HEK293 (cell line): ENCODE measurements at regions of chr19 and their contacts with region 1.

Region 1: GRCh38 chr19:41859618-41860418 is at the start of gene RPS19:
- H3K4me3 ChIP-seq: peak within 1 kb of the TSS; percentile 89
- H3K27ac ChIP-seq: peak within 1 kb of the TSS; percentile 100
- H3K4me1 ChIP-seq: peaks cover 27% of the 10 kb centered on the region
- CTCF ChIP-seq: peak; percentile 100

Region 2: DNA sequence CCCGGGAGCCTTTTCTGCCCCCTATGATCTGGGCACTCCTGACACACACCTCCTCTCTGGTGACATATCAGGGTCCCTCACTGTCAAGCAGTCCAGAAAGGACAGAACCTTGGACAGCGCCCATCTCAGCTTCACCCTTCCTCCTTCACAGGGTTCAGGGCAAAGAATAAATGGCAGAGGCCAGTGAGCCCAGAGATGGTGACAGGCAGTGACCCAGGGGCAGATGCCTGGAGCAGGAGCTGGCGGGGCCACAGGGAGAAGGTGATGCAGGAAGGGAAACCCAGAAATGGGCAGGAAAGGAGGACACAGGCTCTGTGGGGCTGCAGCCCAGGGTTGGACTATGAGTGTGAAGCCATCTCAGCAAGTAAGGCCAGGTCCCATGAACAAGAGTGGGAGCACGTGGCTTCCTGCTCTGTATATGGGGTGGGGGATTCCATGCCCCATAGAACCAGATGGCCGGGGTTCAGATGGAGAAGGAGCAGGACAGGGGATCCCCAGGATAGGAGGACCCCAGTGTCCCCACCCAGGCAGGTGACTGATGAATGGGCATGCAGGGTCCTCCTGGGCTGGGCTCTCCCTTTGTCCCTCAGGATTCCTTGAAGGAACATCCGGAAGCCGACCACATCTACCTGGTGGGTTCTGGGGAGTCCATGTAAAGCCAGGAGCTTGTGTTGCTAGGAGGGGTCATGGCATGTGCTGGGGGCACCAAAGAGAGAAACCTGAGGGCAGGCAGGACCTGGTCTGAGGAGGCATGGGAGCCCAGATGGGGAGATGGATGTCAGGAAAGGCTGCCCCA is 163.2 kb before region 1 on chr19:
- CTCF ChIA-PET with region 1: no interaction called
- POLR2A ChIA-PET with region 1: no interaction called
- H3K4me3 ChIP-seq: no peak overlapping the region
- H3K27ac ChIP-seq: no peak overlapping the region
- H3K4me1 ChIP-seq: no peaks in the 10 kb centered on the region
- CTCF ChIP-seq: no peak

Region 3: DNA sequence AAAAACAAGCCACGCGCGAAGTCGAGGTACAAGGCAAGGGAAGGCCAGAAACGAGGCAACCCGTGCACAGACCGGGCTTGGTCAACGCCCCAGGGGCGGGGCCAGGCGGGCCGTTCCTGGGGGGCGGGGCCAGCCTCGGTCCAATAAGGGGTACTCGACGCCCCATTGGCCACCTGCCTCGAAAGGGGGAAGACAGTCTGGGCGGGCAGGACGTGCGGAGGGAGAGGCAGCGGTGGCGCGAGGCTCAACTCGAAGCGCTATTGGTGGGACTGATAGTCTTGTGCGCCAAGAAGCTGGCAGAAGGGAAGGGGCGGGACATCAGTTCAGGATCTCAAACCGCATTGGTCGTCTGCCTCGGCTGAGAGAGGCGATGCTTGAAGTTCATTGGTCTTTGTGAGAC is 15.2 kb before region 1 on chr19 and contains the start of gene LYPD4:
- CTCF ChIA-PET with region 1: interaction called, 7 read pairs
- POLR2A ChIA-PET with region 1: interaction called, 54 read pairs
- H3K4me3 ChIP-seq: no peak within 1 kb of the TSS
- H3K27ac ChIP-seq: no peak within 1 kb of the TSS
- H3K4me1 ChIP-seq: no peaks in the 10 kb centered on the region
- CTCF ChIP-seq: no peak

Region 4: DNA sequence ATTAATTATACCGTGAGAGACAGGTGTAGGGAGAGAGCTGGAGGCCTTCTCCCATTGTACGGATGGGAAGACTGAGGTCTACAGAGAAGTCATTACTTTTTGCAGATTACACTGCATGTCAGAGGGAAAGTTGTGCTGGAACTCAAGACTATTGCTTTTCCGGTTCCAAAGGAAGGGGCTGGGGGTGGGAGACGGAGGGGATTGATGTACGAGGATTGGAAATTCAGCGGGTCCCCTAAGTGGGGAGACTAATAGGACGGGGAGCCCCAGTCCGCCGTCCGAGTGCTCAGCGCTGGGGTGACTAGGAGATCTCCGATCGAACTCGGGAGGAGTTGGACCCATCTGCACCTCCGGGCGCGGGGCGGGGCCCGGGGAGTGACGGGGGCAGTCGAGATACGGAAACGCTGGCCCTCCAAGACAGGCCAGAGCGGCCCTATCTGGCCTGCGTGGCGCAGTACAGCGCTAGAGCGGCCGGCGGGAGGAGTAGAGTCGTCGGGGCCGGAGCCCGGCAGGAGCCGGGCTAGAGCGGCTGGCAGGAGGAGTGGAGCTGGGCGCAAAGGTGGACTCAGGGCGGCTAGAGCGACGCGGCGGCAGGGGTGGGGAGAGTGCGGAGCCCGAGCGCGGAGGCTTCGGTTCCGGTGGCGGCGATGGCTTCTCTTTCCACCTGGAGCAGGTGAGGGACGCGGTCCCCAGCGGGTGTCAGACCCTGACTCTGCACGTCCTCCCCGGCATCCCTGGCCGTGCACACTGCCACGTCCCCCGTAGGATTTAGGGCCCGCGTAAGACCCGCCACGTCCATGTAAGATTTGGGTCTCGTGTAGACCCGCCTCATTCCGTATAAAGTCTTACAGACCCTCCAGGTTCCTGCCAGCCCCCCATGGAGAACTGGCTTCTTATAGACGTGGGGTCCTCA is 24.3 kb after region 1 on chr19:
- CTCF ChIA-PET with region 1: interaction called, 8 read pairs
- POLR2A ChIA-PET with region 1: interaction called, 68 read pairs
- H3K4me3 ChIP-seq: peak overlapping the region; percentile 85
- H3K27ac ChIP-seq: peak overlapping the region; percentile 62; the same call in 1 of the 2 replicates
- H3K4me1 ChIP-seq: peaks cover 11% of the 10 kb centered on the region; the same call in 1 of the 2 replicates
- CTCF ChIP-seq: peak; percentile 78; the same call in 1 of the 2 replicates

Region 5: GRCh38 chr19:41959056-41960053 is 99.5 kb after region 1 on chr19 and contains the start of gene RABAC1:
- CTCF ChIA-PET with region 1: interaction called, 11 read pairs
- POLR2A ChIA-PET with region 1: interaction called, 38 read pairs
- H3K4me3 ChIP-seq: peak within 1 kb of the TSS; percentile 66
- H3K27ac ChIP-seq: peak within 1 kb of the TSS; percentile 90
- H3K4me1 ChIP-seq: peaks cover 10% of the 10 kb centered on the region
- CTCF ChIP-seq: peak; percentile 88